ENCODE measurements at regions of chr17 and their contacts with region 1.

Region 1: DNA sequence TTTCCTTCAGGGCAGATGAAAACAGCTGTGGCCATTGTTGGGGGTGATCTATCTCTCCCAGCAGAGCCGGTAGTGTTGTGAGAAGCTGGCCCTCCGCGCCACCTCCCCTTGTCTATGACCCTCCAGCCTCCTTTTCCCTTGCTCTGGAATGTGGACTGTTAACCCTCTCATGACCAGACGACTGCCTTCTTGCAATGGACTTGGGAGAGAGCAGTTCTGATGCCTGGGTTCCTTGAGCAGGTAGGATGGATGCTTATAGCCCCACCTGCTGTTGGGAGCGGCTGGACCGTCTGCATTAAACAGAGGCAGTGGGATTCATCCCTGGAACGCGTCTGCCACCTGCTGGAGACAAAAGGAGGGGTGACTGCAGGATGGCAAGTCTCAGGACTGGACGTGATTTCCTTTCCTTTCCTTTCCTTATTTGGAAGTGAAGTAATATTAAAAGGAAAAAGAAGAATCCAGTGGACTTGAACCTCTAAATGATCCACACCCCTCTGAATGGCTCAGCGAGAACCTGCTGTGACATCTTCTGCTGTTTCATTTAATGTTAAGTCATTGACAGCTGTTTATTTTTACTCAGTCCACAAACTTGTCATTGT is 1.8 kb upstream of the SOST start:
- DNase-seq: peak; percentile 91
- ATAC-seq: peak; percentile 97
- H3K4me3 ChIP-seq: no peak overlapping the region
- H3K27ac ChIP-seq: no peak overlapping the region
- H3K4me1 ChIP-seq: peaks cover 2% of the 10 kb centered on the region; the same call in 1 of the 2 replicates
- H3K27me3 ChIP-seq: peaks cover 41% of the 10 kb centered on the region
- CTCF ChIP-seq: peak; percentile 100
- POLR2A ChIP-seq: peak; percentile 73
- RAD21 ChIP-seq: peak; percentile 100

Region 2: GRCh38 chr17:43517615-43518386 is 242.6 kb before region 1 on chr17:
- CTCF ChIA-PET with region 1: no interaction called
- POLR2A ChIA-PET with region 1: no interaction called
- dilution Hi-C with region 1: no loop called
- in situ Hi-C with region 1: no loop called
- intact Hi-C with region 1: loop called (anchors 1 kb)
- DNase-seq: peak; percentile 67
- ATAC-seq: peak; percentile 71
- H3K4me3 ChIP-seq: no peak overlapping the region
- H3K27ac ChIP-seq: no peak overlapping the region
- H3K4me1 ChIP-seq: peaks cover 2% of the 10 kb centered on the region; the same call in 1 of the 2 replicates
- H3K27me3 ChIP-seq: no peaks in the 10 kb centered on the region
- CTCF ChIP-seq: no peak
- POLR2A ChIP-seq: no peak
- RAD21 ChIP-seq: 0 out of 2 replicates have a peak, but pooled peaks have one; percentile 3

Region 3: DNA sequence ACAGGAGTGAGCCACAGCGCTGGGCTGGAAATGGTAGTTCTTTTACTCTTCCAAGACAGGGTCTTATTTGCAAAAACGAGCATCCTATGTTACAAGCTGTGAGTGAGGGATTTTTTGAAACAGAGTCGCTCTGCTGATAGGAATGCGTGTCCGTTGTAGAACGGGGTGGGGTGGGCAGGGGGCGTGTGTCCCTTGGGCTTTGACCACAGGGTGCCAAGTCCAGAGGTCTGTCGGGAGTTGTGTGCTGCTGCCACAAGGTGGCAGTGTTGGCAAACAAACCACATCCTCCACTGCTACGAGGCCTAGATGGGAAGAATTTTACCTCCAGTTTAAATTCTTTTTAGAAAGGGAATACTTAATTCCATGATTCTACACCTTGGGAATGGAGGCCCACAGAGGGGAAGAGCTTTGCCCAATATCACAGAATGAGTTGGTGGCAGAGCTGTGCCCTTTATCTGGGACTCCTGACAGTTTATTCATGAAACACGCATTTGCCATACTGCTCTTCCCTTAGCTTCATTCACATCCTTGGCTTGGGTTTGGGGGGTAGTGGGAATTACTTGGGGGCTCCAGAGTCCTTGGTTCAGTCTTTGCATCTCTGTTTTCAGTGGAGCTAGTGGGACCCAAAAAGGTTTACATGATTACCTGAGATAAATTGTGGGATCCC is 183.7 kb before region 1 on chr17:
- CTCF ChIA-PET with region 1: interaction called, 11 read pairs
- POLR2A ChIA-PET with region 1: no interaction called
- dilution Hi-C with region 1: no loop called
- in situ Hi-C with region 1: no loop called
- intact Hi-C with region 1: loop called (anchors 2 kb)
- DNase-seq: peak; percentile 77
- ATAC-seq: peak; percentile 71
- H3K4me3 ChIP-seq: no peak overlapping the region
- H3K27ac ChIP-seq: no peak overlapping the region
- H3K4me1 ChIP-seq: peaks cover 14% of the 10 kb centered on the region
- H3K27me3 ChIP-seq: no peaks in the 10 kb centered on the region
- CTCF ChIP-seq: peak; percentile 93
- POLR2A ChIP-seq: peak; percentile 56; the same call in 1 of the 2 replicates
- RAD21 ChIP-seq: peak; percentile 99

Region 4: DNA sequence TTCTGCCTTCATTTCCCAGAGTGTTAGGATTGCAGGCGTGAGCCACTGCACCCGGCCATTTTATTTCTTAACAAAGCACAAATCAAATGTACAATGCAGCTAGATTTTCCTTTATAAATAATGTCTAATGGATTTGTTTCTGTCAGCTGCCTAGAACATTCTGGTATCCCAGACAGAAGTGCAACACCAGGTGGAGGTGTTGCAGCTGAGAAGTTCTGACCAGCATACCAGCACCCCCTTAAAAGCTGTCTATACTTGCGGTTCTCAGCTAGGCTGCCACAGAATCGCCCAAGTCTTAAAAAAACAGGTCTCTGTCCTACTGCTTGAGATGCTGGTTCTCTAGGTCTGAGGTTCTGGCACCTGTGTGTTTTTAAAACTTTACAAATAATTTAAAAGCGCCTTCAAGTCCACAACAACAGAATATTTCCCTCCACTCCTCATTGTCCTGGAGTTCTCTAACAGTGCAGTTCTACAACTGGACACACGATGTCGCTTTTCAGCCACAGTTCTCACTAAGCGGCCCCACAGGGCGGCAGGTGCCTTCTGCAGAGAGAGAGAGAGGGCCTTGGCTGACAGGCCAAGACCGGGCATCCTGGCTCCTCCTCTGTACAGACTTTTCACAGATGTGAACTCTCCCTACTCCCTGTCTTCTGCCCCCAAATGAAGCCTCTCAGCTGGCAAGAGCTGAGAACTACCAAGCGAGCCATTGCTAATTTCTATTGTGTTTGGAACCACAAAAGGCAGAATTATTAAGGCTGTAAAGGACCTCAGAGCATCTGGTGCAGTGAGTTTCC is 66.1 kb before region 1 on chr17:
- CTCF ChIA-PET with region 1: interaction called, 62 read pairs
- POLR2A ChIA-PET with region 1: interaction called, 5 read pairs
- dilution Hi-C with region 1: no loop called
- in situ Hi-C with region 1: no loop called
- intact Hi-C with region 1: loop called (anchors 1 kb)
- DNase-seq: peak; percentile 75
- ATAC-seq: peak; percentile 100
- H3K4me3 ChIP-seq: no peak overlapping the region
- H3K27ac ChIP-seq: no peak overlapping the region
- H3K4me1 ChIP-seq: 0 out of 2 replicates have a peak, but pooled peaks cover 2% of the 10 kb centered on the region
- H3K27me3 ChIP-seq: peaks cover 19% of the 10 kb centered on the region
- CTCF ChIP-seq: peak; percentile 98
- POLR2A ChIP-seq: 0 out of 2 replicates have a peak, but pooled peaks have one; percentile 34
- RAD21 ChIP-seq: peak; percentile 99

Region 5: DNA sequence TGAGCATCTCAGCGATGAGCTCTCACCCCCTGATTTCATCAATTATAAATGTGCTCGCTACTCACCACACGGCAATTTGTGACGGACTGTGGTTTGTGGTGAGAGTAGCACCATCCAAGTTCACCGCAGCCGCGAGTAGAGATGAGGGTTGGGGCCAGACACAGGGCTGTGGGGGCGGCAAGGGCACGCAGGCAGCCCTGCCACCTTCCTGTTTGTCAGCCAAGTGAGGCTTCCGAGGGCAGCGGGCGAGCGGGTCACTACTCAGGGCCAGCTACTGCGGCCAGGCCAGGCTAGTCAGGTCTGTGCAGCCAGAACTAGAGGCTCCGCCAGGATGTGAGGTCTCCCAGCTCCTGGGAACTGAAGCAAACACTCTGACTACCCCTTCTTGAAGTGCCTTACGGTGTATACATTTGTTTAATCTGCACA is 59.0 kb before region 1 on chr17:
- CTCF ChIA-PET with region 1: interaction called, 50 read pairs
- POLR2A ChIA-PET with region 1: no interaction called
- dilution Hi-C with region 1: no loop called
- in situ Hi-C with region 1: no loop called
- intact Hi-C with region 1: no loop called
- DNase-seq: peak; percentile 76
- ATAC-seq: peak; percentile 59
- H3K4me3 ChIP-seq: no peak overlapping the region
- H3K27ac ChIP-seq: no peak overlapping the region
- H3K4me1 ChIP-seq: peaks cover 5% of the 10 kb centered on the region; the same call in 1 of the 2 replicates
- H3K27me3 ChIP-seq: peaks cover 10% of the 10 kb centered on the region
- CTCF ChIP-seq: no peak
- POLR2A ChIP-seq: no peak
- RAD21 ChIP-seq: no peak

Region 6: GRCh38 chr17:43846221-43846712 is 85.9 kb after region 1 on chr17:
- CTCF ChIA-PET with region 1: no interaction called
- POLR2A ChIA-PET with region 1: no interaction called
- dilution Hi-C with region 1: no loop called
- in situ Hi-C with region 1: no loop called
- intact Hi-C with region 1: loop called (anchors 5 kb)
- DNase-seq: peak; percentile 58
- ATAC-seq: peak; percentile 100
- H3K4me3 ChIP-seq: no peak overlapping the region
- H3K27ac ChIP-seq: no peak overlapping the region
- H3K4me1 ChIP-seq: no peaks in the 10 kb centered on the region
- H3K27me3 ChIP-seq: peaks cover 26% of the 10 kb centered on the region
- CTCF ChIP-seq: peak; percentile 93
- POLR2A ChIP-seq: no peak
- RAD21 ChIP-seq: peak; percentile 82

Measured in IMR-90 (cell line).